MCF 10A (cell line): ENCODE measurements at regions of chr2 and their contacts with region 1.

Region 1: GRCh38 chr2:10434886-10435819 is 13.0 kb downstream of the ODC1 start:
- DNase-seq: peak; percentile 81
- H3K4me3 Mint-ChIP-seq: no peak overlapping the region
- H3K27ac Mint-ChIP-seq: peak overlapping the region; percentile 29
- H3K4me1 Mint-ChIP-seq: no peaks in the 10 kb centered on the region
- H3K27me3 Mint-ChIP-seq: no peaks in the 10 kb centered on the region
- CTCF ChIP-seq: peak; percentile 96

Region 2: GRCh38 chr2:10057231-10058107 is 377.7 kb before region 1 on chr2:
- CTCF ChIA-PET with region 1: interaction called, 13 read pairs
- POLR2A ChIA-PET with region 1: interaction called, 3 read pairs
- intact Hi-C with region 1: no loop called
- DNase-seq: peak; percentile 70
- H3K4me3 Mint-ChIP-seq: peak overlapping the region; percentile 59
- H3K27ac Mint-ChIP-seq: peak overlapping the region; percentile 85
- H3K4me1 Mint-ChIP-seq: peaks cover 10% of the 10 kb centered on the region
- H3K27me3 Mint-ChIP-seq: no peaks in the 10 kb centered on the region
- CTCF ChIP-seq: no peak

Region 3: GRCh38 chr2:10109311-10109710 is 325.8 kb before region 1 on chr2:
- CTCF ChIA-PET with region 1: interaction called, 10 read pairs
- POLR2A ChIA-PET with region 1: no interaction called
- intact Hi-C with region 1: no loop called
- DNase-seq: no peak
- H3K4me3 Mint-ChIP-seq: no peak overlapping the region
- H3K27ac Mint-ChIP-seq: no peak overlapping the region
- H3K4me1 Mint-ChIP-seq: no peaks in the 10 kb centered on the region
- H3K27me3 Mint-ChIP-seq: no peaks in the 10 kb centered on the region
- CTCF ChIP-seq: no peak

Region 4: GRCh38 chr2:10135296-10136089 is 299.7 kb before region 1 on chr2:
- CTCF ChIA-PET with region 1: interaction called, 11 read pairs
- POLR2A ChIA-PET with region 1: interaction called, 3 read pairs
- intact Hi-C with region 1: no loop called
- DNase-seq: peak; percentile 57
- H3K4me3 Mint-ChIP-seq: no peak overlapping the region
- H3K27ac Mint-ChIP-seq: peak overlapping the region; percentile 66
- H3K4me1 Mint-ChIP-seq: peaks cover 19% of the 10 kb centered on the region
- H3K27me3 Mint-ChIP-seq: no peaks in the 10 kb centered on the region
- CTCF ChIP-seq: no peak

Region 5: GRCh38 chr2:10414000-10414451 is 21.1 kb before region 1 on chr2:
- CTCF ChIA-PET with region 1: interaction called, 34 read pairs
- POLR2A ChIA-PET with region 1: interaction called, 6 read pairs
- intact Hi-C with region 1: no loop called
- DNase-seq: peak; percentile 79
- H3K4me3 Mint-ChIP-seq: no peak overlapping the region
- H3K27ac Mint-ChIP-seq: peak overlapping the region; percentile 66
- H3K4me1 Mint-ChIP-seq: peaks cover 20% of the 10 kb centered on the region
- H3K27me3 Mint-ChIP-seq: no peaks in the 10 kb centered on the region
- CTCF ChIP-seq: no peak

Region 6: GRCh38 chr2:10668402-10669012 is 233.4 kb after region 1 on chr2:
- CTCF ChIA-PET with region 1: interaction called, 5 read pairs
- POLR2A ChIA-PET with region 1: no interaction called
- intact Hi-C with region 1: loop called (anchors 1 kb)
- DNase-seq: peak; percentile 69
- H3K4me3 Mint-ChIP-seq: no peak overlapping the region
- H3K27ac Mint-ChIP-seq: no peak overlapping the region
- H3K4me1 Mint-ChIP-seq: no peaks in the 10 kb centered on the region
- H3K27me3 Mint-ChIP-seq: no peaks in the 10 kb centered on the region
- CTCF ChIP-seq: peak; percentile 38